H1 (cell line): ENCODE measurements at regions of chr17 and their contacts with region 1.

Region 1: DNA sequence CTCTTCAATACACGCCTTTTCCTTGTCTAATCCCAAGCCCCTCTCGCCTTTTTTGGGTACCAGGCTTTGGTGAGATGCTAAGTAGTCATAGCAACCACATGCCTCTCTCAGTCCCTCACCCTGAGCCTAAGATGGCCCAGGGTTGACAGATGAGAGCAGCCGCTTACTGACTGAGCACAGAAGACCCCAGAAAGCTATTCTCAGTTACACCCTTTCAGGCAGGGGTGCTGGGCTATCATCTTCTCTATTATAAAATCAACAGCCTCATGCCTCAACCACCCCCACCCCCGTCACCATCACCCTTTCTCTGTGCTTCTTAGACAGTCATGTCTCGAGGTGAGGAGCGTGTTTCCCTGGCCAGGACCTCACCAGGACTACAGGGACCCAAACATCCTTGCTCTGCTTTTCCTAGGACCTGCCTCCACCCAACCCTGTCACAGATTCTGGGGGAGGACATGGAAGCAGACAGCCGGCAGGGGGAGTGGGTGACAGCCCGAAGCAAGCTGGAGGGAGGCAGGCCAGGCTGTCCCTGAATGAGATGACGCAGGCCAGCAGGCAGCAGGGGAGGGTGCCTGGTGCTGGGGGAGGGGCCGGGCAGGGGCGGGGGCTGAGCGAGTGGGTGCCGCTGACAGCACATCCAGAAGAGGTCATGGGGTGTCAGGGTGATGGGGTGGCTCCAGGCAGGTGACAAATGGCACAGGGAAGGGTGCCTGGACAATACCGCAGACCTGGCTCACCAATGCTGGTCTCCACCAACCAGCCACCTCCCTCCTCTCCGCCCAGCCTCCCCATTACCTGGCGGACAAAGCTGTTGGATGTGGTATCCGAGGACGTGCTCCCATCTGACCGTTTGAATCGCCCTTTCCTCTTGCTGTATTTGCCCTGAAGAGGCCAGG is 3.1 kb downstream of the CACNB1 start:
- DNase-seq: peak in 1 of 2 experiments; percentile 65
- H3K4me3 ChIP-seq: peak overlapping the region in 2 of 4 experiments; percentile 8 to 89; a peak in 4 of 8 replicates
- H3K27ac ChIP-seq: 0 out of 2 replicates have a peak overlapping the region, but pooled peaks have one; percentile 32
- H3K4me1 ChIP-seq: peaks cover 4 to 27% (median 22%) of the 10 kb centered on the region in 4 experiments
- H3K27me3 ChIP-seq: no peaks in the 10 kb centered on the region
- CTCF ChIP-seq: peak; percentile 34 to 58 (median 57)
- EP300 ChIP-seq: no peak
- POLR2A ChIP-seq: no peak
- RAD21 ChIP-seq: peak in 1 of 2 experiments; percentile 36; a peak in 1 of 4 replicates

Region 2: DNA sequence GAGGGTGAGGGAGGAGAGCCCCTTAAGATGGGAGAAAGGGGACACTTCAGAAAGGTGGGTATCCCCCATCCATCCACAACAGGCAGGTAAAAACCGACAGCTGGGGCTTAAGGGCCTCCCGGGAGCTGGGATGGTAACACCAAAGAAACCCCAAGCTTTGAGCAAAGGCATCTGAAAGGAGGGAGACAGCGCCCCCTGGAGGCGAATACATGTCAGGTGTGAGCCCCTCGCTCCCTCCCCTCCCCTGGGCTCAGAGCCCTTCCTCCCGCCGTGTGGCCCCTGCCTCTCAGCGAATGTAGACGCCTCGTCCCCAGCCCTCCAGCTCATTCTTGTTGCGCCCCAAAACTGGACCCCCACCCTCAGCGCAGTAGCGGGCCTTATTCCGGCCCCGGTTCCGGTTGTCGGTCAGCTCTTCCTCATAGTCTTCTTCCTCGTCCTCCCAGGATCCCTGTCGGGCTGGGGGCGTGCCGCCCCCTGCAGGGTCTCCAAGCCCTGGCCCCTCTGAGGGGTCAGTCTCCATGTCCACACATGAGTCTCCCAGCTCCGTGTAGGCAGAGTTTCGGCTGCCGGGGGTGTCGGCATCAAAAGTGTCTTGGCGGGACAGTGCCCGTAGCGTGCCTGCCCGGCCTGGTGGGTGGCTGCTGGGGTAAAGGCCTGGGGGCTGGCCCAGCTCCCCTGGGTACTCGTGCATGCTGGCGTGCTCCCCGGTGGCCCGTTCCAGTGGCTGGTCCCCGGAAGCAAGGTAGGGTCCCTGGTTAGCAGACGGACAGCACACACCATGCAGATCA is 19.2 kb before region 1 on chr17:
- CTCF ChIA-PET with region 1: interaction called, 23 read pairs
- POLR2A ChIA-PET with region 1: interaction called, 22 read pairs
- DNase-seq: peak; percentile 82 to 92
- H3K4me3 ChIP-seq: peak overlapping the region in 1 of 4 experiments; percentile 22; a peak in 1 of 8 replicates
- H3K27ac ChIP-seq: no peak overlapping the region
- H3K4me1 ChIP-seq: peaks cover 0 to 14% (median 10%) of the 10 kb centered on the region in 4 experiments; a peak in 6 of 7 replicates
- H3K27me3 ChIP-seq: no peaks in the 10 kb centered on the region
- CTCF ChIP-seq: peak; percentile 87 to 92 (median 91)
- EP300 ChIP-seq: no peak
- POLR2A ChIP-seq: peak in 1 of 2 experiments; percentile 60; a peak in 1 of 3 replicates
- RAD21 ChIP-seq: peak; percentile 71 to 83

Region 3: DNA sequence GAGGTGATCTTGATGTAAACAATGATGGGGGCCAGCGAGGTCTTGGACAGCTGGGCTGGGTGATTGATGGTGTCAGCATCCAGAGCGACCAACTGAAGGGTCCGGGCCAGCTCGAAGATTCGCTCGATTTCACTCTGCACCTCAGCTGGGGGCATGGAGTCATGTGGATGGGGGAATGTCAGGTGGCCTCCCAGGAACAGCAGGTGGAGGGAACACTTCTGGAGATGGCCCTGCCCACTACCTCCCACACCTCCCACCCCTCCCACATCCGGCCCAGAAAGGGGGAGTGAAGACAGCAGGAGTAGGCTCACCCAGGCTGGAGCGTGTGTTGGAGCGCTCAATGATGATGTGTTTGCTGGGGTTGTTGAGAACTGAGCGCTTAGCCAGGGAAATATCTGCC is 10.6 kb before region 1 on chr17:
- CTCF ChIA-PET with region 1: interaction called, 21 read pairs
- POLR2A ChIA-PET with region 1: interaction called, 5 read pairs
- DNase-seq: no peak
- H3K4me3 ChIP-seq: no peak overlapping the region
- H3K27ac ChIP-seq: no peak overlapping the region
- H3K4me1 ChIP-seq: no peaks in the 10 kb centered on the region
- H3K27me3 ChIP-seq: no peaks in the 10 kb centered on the region
- CTCF ChIP-seq: no peak
- EP300 ChIP-seq: no peak
- POLR2A ChIP-seq: no peak
- RAD21 ChIP-seq: no peak

Region 4: DNA sequence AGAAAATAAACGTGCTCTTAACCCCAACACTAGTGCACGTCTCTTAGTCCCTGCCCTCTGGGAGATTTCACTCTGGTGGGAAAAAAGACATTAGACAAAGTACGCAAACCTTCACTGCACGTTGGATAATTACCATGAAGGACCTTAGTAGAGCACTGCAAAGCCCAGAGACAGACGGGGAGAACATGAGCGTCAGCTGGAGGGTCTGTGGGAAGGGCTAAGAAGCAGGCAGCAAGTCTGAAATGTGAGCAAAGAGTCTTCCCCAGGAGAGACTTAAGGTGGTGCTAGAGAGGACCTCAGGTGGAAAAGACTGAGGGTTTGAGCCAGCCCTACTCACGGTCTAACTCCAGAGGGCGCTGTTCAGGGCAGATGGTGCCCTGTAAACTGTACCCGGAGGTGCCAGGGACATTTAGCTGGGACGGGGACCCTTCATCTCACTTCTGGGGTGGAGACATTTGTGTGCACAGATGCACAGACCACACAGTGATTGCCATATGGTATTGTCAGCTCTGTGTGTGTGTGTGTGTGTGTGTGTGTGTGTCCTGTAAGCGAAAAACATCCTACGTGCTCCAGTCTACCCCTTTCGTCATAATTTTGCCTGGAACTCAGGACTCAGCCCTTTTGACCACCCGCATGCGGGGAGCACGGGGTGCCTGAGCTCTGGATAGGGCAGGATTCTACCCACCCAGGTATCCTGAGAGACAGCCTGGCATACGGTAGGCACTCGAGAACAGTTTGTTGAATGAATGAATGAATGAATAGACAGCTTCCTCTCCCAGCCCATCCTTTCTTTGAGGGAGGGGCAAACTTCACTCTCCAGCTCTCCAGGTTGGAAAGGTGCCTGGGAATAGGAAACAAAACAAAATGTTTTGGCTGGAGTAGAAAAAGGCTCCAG is 41.5 kb after region 1 on chr17:
- CTCF ChIA-PET with region 1: interaction called, 24 read pairs
- POLR2A ChIA-PET with region 1: interaction called, 15 read pairs
- DNase-seq: peak; percentile 49 to 84
- H3K4me3 ChIP-seq: no peak overlapping the region
- H3K27ac ChIP-seq: no peak overlapping the region
- H3K4me1 ChIP-seq: peaks cover 0 to 14% (median 10%) of the 10 kb centered on the region in 4 experiments; a peak in 6 of 7 replicates
- H3K27me3 ChIP-seq: no peaks in the 10 kb centered on the region
- CTCF ChIP-seq: peak; percentile 94 to 100 (median 99)
- EP300 ChIP-seq: no peak
- POLR2A ChIP-seq: no peak
- RAD21 ChIP-seq: peak; percentile 45; a peak in 3 of 4 replicates

Region 5: GRCh38 chr17:39244600-39245570 is 50.5 kb after region 1 on chr17:
- CTCF ChIA-PET with region 1: interaction called, 16 read pairs
- POLR2A ChIA-PET with region 1: interaction called, 24 read pairs
- DNase-seq: peak; percentile 93 to 99
- H3K4me3 ChIP-seq: no peak overlapping the region
- H3K27ac ChIP-seq: no peak overlapping the region
- H3K4me1 ChIP-seq: peaks cover 0 to 9% (median 5%) of the 10 kb centered on the region in 4 experiments; a peak in 6 of 7 replicates
- H3K27me3 ChIP-seq: no peaks in the 10 kb centered on the region
- CTCF ChIP-seq: peak; percentile 83 to 99 (median 93)
- EP300 ChIP-seq: no peak
- POLR2A ChIP-seq: no peak
- RAD21 ChIP-seq: peak; percentile 94 to 96